Activated CD4-positive, alpha-beta memory T cell treated with anti-CD3 and anti-CD28 coated beads, Interleukin-2, amount 10 ng/mL, durations not matched to agents 7 days and 5 days (primary cell): ENCODE measurements at regions of chr17 and their contacts with region 1.

Region 1: DNA sequence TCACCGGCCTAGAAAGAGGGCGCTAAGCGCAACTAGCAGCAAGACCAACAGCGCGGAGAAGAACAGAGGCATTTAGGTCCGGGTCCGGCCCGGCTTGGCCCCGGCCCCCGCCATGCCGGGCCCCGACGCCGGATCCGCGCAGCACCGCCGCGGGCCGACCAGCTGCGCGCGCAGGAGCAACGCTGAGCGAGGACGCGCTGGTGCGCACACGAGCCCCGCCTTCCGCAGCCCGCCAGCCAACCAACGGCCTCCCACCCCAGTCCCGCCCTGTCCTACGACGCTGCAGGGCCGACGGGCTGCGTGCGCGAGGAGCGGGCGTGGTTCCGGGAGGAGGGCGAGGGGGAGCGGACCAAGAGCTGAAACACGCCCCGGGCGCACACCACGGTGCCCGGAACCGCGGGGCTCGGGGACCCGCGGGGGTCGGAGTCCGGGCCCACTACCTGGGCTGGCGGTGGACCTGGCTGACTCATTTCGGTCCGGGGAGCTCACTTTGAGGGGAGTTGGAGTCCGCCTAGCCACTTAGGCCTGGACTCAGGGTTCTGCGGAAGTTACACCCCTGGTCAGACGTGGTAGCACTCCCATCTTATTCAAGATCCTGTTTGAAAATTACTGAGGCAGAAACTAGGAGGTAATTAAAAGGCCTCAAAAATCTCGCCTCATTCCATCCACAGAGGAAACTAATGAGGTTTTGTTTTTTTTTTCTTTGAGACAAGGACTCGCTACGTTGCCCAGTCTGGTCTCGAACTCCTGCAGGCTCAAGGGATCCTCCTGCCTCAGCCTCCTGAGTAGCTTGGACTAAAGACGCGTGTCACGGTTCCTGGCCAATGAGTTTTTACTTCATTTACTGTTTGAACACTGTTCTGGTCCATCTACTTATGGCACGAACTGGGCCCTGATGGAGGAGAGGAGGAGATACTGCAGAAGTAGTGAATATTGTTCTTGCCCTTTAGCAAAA is at the start of gene BLTP2:
- DNase-seq: peak; percentile 97
- H3K4me3 Mint-ChIP-seq: peak within 1 kb of the TSS; percentile 93
- H3K27ac Mint-ChIP-seq: peak within 1 kb of the TSS; percentile 86
- H3K4me1 Mint-ChIP-seq: peaks cover 42% of the 10 kb centered on the region
- H3K27me3 Mint-ChIP-seq: no peaks in the 10 kb centered on the region
- total RNA-seq, gene BLTP2: 120 to 128 TPM

Region 2: GRCh38 chr17:28384281-28385036 is 260.8 kb before region 1 on chr17:
- CTCF ChIA-PET with region 1: no interaction called
- POLR2A ChIA-PET with region 1: no interaction called
- DNase-seq: peak; percentile 80
- H3K4me3 Mint-ChIP-seq: peak overlapping the region; percentile 86
- H3K27ac Mint-ChIP-seq: peak overlapping the region; percentile 78
- H3K4me1 Mint-ChIP-seq: peaks cover 32% of the 10 kb centered on the region
- H3K27me3 Mint-ChIP-seq: no peaks in the 10 kb centered on the region

Region 3: GRCh38 chr17:28576758-28577465 is 68.3 kb before region 1 on chr17 and contains the start of gene ALDOC:
- CTCF ChIA-PET with region 1: interaction called, 3 read pairs
- POLR2A ChIA-PET with region 1: interaction called, 10 read pairs
- DNase-seq: peak; percentile 98
- H3K4me3 Mint-ChIP-seq: peak within 1 kb of the TSS; percentile 84
- H3K27ac Mint-ChIP-seq: peak within 1 kb of the TSS; percentile 72
- H3K4me1 Mint-ChIP-seq: peaks cover 73% of the 10 kb centered on the region
- H3K27me3 Mint-ChIP-seq: no peaks in the 10 kb centered on the region
- total RNA-seq, gene ALDOC: 140 to 147 TPM

Region 4: GRCh38 chr17:28661635-28662537 is 16.6 kb after region 1 on chr17 and contains the starts of genes SDF2 and SUPT6H:
- CTCF ChIA-PET with region 1: interaction called, 80 read pairs
- POLR2A ChIA-PET with region 1: interaction called, 115 read pairs
- DNase-seq: peak; percentile 94
- H3K4me3 Mint-ChIP-seq: peak within 1 kb of the TSS; percentile 98
- H3K27ac Mint-ChIP-seq: peak within 1 kb of the TSS; percentile 98
- H3K4me1 Mint-ChIP-seq: peaks cover 52% of the 10 kb centered on the region
- H3K27me3 Mint-ChIP-seq: no peaks in the 10 kb centered on the region
- total RNA-seq, gene SDF2: 49.0 to 52.9 TPM
- total RNA-seq, gene SUPT6H: 60.7 to 65.8 TPM

Region 5: GRCh38 chr17:28675980-28676379 is 30.7 kb after region 1 on chr17:
- CTCF ChIA-PET with region 1: interaction called, 11 read pairs
- POLR2A ChIA-PET with region 1: interaction called, 10 read pairs
- DNase-seq: peak; percentile 19
- H3K4me3 Mint-ChIP-seq: no peak overlapping the region
- H3K27ac Mint-ChIP-seq: no peak overlapping the region
- H3K4me1 Mint-ChIP-seq: no peaks in the 10 kb centered on the region
- H3K27me3 Mint-ChIP-seq: no peaks in the 10 kb centered on the region

Region 6: DNA sequence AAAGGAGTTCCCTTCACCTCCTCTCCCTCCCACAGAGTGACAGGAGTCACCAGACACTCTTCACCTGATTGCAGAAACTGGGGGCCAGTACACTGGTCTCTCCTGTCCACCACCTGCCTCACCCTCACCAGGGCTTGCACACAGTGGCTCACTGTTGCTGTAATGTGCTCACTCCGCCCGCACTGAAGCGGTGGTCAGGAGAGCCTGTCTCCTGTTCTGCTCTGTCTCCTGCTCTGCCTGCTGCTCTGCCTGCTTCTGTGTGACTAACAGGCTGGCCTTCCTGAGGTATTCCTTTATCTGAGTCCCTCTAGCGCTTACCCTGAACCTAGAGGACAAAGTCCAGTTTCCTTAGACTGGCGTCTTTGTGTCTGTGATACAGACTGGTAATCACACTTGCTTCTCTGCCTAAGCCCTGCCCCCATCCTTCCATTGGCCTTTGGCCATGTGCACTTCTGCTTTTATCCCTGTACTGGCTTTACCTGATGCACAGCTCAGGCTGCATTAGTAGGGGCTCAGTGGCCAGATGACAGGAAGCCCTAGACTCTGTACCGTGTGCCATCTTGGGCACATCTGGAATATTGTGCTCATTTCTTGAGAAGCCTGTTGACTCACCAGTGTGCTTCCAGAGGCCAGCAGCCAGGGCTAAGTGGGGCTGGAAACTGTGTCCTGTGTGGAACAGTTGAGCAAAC is 53.1 kb after region 1 on chr17:
- CTCF ChIA-PET with region 1: no interaction called
- POLR2A ChIA-PET with region 1: no interaction called
- DNase-seq: no peak
- H3K4me3 Mint-ChIP-seq: no peak overlapping the region
- H3K27ac Mint-ChIP-seq: no peak overlapping the region
- H3K4me1 Mint-ChIP-seq: no peaks in the 10 kb centered on the region
- H3K27me3 Mint-ChIP-seq: no peaks in the 10 kb centered on the region

Region 7: DNA sequence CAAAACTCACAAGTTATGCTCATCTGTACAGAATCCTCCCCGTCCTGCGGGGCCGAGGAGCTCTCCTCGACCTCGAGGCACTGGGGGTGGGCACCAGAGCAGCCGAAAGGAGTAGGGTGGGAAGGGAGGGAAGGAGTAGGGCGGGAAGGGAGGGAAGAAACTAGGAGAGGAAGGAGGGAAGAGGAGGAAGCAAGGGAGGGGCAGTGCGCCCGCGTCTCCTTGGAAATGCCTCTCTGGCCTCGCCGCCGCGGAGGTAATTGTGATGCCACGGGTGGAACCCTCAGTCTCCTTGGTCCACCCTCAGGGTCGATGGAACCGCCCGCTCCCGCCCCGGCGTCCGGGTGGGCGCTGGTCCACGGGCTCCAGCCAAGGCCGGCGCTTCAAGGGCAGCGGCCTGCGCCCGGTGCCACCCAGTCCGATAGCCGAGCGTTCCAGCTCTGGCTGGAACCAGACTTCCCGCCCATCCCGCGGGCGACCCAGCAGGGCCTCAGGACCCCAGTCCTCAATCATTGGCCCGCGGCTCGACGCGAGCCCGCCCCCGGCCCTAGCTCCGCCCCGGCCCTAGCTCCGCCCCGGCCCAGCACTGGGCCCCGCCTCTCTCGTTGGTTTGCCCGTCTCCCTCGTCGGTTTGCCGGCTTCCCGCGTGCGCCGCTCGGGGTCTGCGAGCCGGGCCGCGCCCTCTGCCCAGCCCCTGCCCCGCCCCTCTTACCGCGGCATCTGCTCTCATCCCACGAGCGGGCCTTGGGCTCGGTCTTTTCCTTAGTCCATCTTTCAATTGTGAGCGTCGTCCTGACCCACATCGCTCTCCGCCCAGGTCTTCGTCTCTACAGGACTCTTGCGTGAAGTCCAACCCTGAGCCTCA is 65.8 kb after region 1 on chr17:
- CTCF ChIA-PET with region 1: interaction called, 4 read pairs
- POLR2A ChIA-PET with region 1: interaction called, 17 read pairs
- DNase-seq: peak; percentile 92
- H3K4me3 Mint-ChIP-seq: peak overlapping the region; percentile 80
- H3K27ac Mint-ChIP-seq: peak overlapping the region; percentile 90
- H3K4me1 Mint-ChIP-seq: peaks cover 22% of the 10 kb centered on the region
- H3K27me3 Mint-ChIP-seq: peaks cover 17% of the 10 kb centered on the region

Region 8: DNA sequence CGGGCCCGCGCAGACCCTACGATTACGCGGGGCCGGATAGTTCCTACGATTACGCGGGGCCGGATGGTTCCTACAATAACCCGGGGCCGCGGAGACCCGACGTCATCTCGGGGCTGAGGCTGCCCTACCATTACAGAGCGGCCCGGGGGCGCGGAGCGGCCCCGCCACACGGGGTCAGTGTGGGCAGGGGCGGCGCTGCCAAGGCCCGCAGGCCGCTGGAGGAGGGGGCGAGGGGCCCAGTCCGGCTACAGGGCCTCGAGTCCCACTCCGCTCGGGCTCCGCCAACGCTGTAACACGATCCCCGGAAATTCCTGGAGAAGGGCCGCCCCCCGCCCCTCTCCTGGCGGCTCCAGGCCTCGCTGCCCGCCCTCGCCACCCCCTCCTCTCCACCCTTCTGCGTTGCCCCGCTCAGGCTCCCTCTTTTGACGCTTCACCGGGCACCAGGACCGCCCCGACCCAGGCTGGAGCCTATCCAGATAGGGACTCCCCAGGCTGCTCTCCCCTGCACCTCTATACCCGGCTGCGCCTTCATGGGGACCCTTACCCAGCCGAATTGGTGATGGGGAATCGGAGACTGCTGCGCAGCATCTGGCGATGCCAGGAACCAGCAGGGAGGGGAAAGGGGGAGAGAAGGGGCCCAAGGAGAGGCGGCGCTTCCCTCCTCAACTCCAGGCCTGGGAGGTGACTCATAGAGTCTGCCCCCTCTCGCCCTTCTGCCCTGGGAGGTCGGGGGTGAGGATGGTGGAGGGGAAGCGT is 72.5 kb after region 1 on chr17 and contains the start of gene RAB34:
- CTCF ChIA-PET with region 1: interaction called, 7 read pairs
- POLR2A ChIA-PET with region 1: interaction called, 31 read pairs
- DNase-seq: peak; percentile 23
- H3K4me3 Mint-ChIP-seq: peak within 1 kb of the TSS; percentile 44
- H3K27ac Mint-ChIP-seq: peak within 1 kb of the TSS; percentile 64
- H3K4me1 Mint-ChIP-seq: peaks cover 40% of the 10 kb centered on the region
- H3K27me3 Mint-ChIP-seq: peaks cover 25% of the 10 kb centered on the region
- total RNA-seq, gene RAB34: 6.5 to 7.4 TPM

Region 9: DNA sequence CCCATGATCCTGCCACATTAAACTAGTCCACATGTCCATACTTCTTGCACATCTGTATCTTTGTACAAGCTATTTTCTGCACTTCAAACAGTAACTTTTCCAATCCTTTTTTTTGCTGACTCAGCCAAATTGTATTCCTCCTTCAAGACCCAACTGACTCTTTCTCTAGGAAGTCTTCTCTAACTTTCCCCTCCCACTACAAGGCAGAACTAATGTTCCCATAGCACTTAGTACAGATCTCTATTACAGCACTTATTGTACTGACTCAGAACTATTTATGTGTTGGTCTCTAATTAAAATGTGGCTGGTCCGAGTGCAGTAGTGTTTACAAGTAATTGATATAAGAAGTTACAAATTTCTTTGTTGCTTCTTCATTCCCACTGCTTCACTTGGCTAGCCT is 189.2 kb after region 1 on chr17:
- CTCF ChIA-PET with region 1: no interaction called
- POLR2A ChIA-PET with region 1: no interaction called
- DNase-seq: no peak
- H3K4me3 Mint-ChIP-seq: no peak overlapping the region
- H3K27ac Mint-ChIP-seq: no peak overlapping the region
- H3K4me1 Mint-ChIP-seq: peaks cover 8% of the 10 kb centered on the region
- H3K27me3 Mint-ChIP-seq: no peaks in the 10 kb centered on the region